Right ventricle myocardium superior (tissue), 1 donor: ENCODE measurements at regions of chr14 and their contacts with region 1.

Region 1: GRCh38 chr14:55707365-55707804 is 127.4 kb downstream of the KTN1 start:
- DNase-seq: no peak
- ATAC-seq: peak; percentile 63

Region 2: GRCh38 chr14:55425091-55425490 is 282.3 kb before region 1 on chr14:
- intact Hi-C with region 1: no loop called
- DNase-seq: no peak
- ATAC-seq: no peak

Region 3: GRCh38 chr14:56422703-56423213 is 715.4 kb after region 1 on chr14:
- intact Hi-C with region 1: loop called (anchors 5 kb)
- DNase-seq: peak; percentile 41
- ATAC-seq: peak; percentile 98

Region 4: DNA sequence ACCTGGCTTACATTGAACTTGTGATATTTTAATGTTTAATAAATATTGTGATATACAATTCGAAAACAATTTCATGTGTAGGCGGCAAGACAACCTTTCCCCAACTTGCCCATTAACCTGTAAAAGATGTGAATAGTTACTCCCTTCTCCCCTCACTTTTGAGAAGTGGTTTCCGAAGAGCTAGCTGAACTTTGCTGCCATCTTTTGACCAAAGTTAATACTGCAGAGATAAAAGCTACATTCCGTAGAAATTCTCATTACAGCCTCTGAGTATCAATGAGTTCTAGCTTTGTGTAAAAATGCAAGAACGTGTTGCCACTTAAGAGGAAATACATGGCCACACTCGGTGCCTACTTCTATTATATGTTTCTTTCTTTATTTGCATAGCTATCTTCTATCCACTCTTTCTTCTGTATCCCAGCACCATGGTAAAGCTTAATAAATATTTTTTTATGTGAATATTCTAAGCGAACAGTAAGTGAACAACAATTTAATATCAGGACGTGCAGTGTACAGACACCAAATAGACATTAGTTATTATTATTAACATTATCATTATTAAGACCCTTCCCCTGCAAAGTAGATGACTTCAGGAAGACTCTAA is 767.1 kb after region 1 on chr14:
- intact Hi-C with region 1: loop called (anchors 5 kb)
- DNase-seq: no peak
- ATAC-seq: no peak